GM12878 (cell line): ENCODE measurements at regions of chr9 and their contacts with region 1.

Region 1: GRCh38 chr9:94681508-94681907 is 42.2 kb upstream of the FBP1 start:
- DNase-seq: peak; percentile 17
- ATAC-seq: peak; percentile 99
- H3K4me3 ChIP-seq: no peak overlapping the region
- H3K27ac ChIP-seq: no peak overlapping the region
- H3K4me1 ChIP-seq: no peaks in the 10 kb centered on the region; the same call in 1 of the 2 replicates
- H3K27me3 ChIP-seq: no peaks in the 10 kb centered on the region
- CTCF ChIP-seq: peak; percentile 65 to 82 (median 65); a peak in 5 of 6 replicates
- EP300 ChIP-seq: no peak
- POLR2A ChIP-seq: no peak
- RAD21 ChIP-seq: peak; percentile 79

Region 2: DNA sequence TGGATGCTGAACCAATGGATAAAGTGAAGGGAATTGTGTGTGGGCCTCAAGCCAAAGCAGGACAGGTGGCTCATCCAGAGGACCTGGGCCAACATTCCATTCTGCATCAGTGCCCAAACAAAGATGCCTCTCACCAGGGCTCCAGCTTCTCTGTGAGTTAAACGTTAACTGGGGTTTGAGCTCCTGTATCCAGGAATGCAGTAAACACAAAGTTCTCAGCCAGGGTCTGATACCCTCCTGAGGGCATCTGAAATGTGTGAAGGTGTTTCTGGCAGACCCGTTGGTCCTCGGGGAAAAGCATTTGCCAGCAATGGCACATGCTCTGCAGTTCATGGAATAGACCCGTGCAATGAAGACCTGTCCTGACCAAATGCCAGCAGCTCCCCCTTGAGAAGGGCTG is 11.1 kb after region 1 on chr9:
- CTCF ChIA-PET with region 1: interaction called, 14 read pairs
- POLR2A ChIA-PET with region 1: no interaction called
- RAD21 ChIA-PET with region 1: interaction called, 4 read pairs
- SMC1A ChIA-PET with region 1: interaction called, 4 read pairs
- in situ Hi-C with region 1: no loop called
- intact Hi-C with region 1: no loop called
- DNase-seq: no peak
- ATAC-seq: no peak
- H3K4me3 ChIP-seq: no peak overlapping the region
- H3K27ac ChIP-seq: no peak overlapping the region
- H3K4me1 ChIP-seq: no peaks in the 10 kb centered on the region
- H3K27me3 ChIP-seq: no peaks in the 10 kb centered on the region; a peak in 1 of 4 replicates
- CTCF ChIP-seq: no peak
- EP300 ChIP-seq: no peak
- POLR2A ChIP-seq: no peak
- RAD21 ChIP-seq: no peak

Region 3: DNA sequence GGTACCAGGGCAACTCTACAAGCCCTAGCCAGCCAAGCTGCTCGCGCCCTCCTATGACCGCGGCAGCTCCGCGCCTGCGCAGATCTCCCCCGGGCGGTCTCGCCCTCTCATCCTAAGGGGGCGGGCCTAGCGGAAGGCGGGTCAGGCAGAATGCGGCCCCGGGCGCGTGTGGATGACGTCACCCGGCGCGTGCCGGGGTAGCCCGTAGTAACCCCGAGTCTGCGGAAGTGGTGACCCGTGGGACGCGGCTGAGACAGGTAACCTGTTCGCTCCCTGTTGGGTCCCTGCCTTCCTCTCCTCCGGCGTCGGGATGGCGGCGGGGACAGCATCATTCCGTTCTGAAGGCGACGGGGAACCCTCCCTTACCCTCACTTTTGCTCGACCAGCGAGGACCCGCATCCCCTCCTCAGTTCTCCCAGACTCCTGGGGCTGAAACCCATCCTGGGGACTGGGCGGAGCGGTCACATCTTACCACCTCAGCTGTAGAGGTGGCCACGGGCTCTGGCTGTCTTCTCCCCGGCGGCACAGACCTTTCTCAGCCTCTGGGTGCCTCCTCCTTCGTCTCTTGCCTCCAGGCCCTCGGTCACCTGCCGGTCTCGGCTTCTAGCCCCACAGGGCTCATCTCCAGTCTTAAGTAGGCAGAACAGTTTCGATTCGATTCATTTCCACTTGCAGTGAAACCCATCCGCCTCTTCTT is 45.1 kb after region 1 on chr9 and contains the start of gene AOPEP:
- CTCF ChIA-PET with region 1: interaction called, 5 read pairs
- POLR2A ChIA-PET with region 1: no interaction called
- RAD21 ChIA-PET with region 1: interaction called, 10 read pairs
- SMC1A ChIA-PET with region 1: interaction called, 3 read pairs
- in situ Hi-C with region 1: no loop called
- intact Hi-C with region 1: no loop called
- DNase-seq: peak; percentile 86
- ATAC-seq: peak; percentile 98
- H3K4me3 ChIP-seq: peak within 1 kb of the TSS; percentile 81
- H3K27ac ChIP-seq: peak within 1 kb of the TSS; percentile 86
- H3K4me1 ChIP-seq: peaks cover 3% of the 10 kb centered on the region; the same call in 1 of the 2 replicates
- H3K27me3 ChIP-seq: no peaks in the 10 kb centered on the region
- CTCF ChIP-seq: no peak
- EP300 ChIP-seq: 0 out of 4 replicates have a peak, but pooled peaks of 1 of the 2 experiments have one; percentile 8
- POLR2A ChIP-seq: peak; percentile 94
- RAD21 ChIP-seq: no peak
- polyA plus RNA-seq, gene AOPEP: 2.3 to 5.1 TPM

Region 4: DNA sequence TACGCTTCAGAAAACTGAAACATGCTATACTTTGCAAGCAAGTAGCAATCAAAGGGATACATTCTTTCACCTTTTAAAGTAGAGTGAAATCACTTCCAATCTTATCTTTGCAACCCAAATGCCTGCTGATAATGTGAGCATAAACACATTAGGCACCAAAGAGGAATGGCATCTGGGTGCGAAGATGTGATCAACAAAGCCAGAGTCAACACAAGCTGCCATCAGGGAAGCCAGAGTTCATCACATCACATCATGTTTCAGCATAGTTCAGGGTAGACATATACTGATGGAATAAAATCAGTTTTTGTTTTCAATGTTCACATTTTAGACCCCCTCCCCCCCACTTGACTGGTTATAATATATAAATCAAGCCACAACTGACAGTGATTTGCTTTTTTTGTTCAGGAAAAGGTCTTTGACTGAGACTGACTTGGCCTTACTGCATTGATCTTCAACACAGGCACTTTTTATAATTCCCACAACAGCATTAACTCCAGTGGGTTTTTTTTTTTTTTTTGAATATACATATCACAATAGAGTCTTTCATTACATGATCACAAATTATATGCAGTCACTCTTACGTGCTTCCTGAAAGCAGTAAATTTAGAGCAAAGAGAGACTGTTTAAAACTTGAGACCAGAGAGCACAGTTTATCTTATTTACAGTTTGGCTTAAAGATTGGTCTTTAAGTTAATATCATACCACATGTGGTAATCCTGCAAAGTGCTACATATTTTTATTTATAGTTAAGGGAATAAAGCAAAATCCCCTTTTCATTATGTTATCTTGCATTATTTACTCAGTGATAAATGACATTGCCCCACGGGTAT is 65.2 kb after region 1 on chr9:
- CTCF ChIA-PET with region 1: no interaction called
- POLR2A ChIA-PET with region 1: no interaction called
- RAD21 ChIA-PET with region 1: no interaction called
- SMC1A ChIA-PET with region 1: no interaction called
- in situ Hi-C with region 1: no loop called
- intact Hi-C with region 1: no loop called
- DNase-seq: no peak
- ATAC-seq: no peak
- H3K4me3 ChIP-seq: no peak overlapping the region
- H3K27ac ChIP-seq: no peak overlapping the region
- H3K4me1 ChIP-seq: no peaks in the 10 kb centered on the region
- H3K27me3 ChIP-seq: no peaks in the 10 kb centered on the region
- CTCF ChIP-seq: no peak
- EP300 ChIP-seq: no peak
- POLR2A ChIP-seq: no peak
- RAD21 ChIP-seq: no peak

Region 5: GRCh38 chr9:94920398-94921091 is 239.0 kb after region 1 on chr9:
- CTCF ChIA-PET with region 1: interaction called, 53 read pairs
- POLR2A ChIA-PET with region 1: no interaction called
- RAD21 ChIA-PET with region 1: interaction called, 30 read pairs
- SMC1A ChIA-PET with region 1: interaction called, 41 read pairs
- in situ Hi-C with region 1: loop called (anchors 5 kb)
- intact Hi-C with region 1: loop called (anchors 1 kb)
- DNase-seq: no peak
- ATAC-seq: no peak
- H3K4me3 ChIP-seq: no peak overlapping the region
- H3K27ac ChIP-seq: no peak overlapping the region
- H3K4me1 ChIP-seq: no peaks in the 10 kb centered on the region
- H3K27me3 ChIP-seq: no peaks in the 10 kb centered on the region
- CTCF ChIP-seq: no peak
- EP300 ChIP-seq: no peak
- POLR2A ChIP-seq: no peak
- RAD21 ChIP-seq: no peak

Region 6: GRCh38 chr9:95167998-95168397 is 486.5 kb after region 1 on chr9:
- CTCF ChIA-PET with region 1: interaction called, 52 read pairs
- POLR2A ChIA-PET with region 1: no interaction called
- RAD21 ChIA-PET with region 1: interaction called, 15 read pairs
- SMC1A ChIA-PET with region 1: interaction called, 25 read pairs
- in situ Hi-C with region 1: no loop called
- intact Hi-C with region 1: no loop called
- DNase-seq: no peak
- ATAC-seq: peak; percentile 72
- H3K4me3 ChIP-seq: no peak overlapping the region
- H3K27ac ChIP-seq: no peak overlapping the region
- H3K4me1 ChIP-seq: peaks cover 5% of the 10 kb centered on the region; the same call in 1 of the 2 replicates
- H3K27me3 ChIP-seq: no peaks in the 10 kb centered on the region
- CTCF ChIP-seq: peak; percentile 56 to 87 (median 81)
- EP300 ChIP-seq: no peak
- POLR2A ChIP-seq: no peak
- RAD21 ChIP-seq: peak; percentile 59

Region 7: DNA sequence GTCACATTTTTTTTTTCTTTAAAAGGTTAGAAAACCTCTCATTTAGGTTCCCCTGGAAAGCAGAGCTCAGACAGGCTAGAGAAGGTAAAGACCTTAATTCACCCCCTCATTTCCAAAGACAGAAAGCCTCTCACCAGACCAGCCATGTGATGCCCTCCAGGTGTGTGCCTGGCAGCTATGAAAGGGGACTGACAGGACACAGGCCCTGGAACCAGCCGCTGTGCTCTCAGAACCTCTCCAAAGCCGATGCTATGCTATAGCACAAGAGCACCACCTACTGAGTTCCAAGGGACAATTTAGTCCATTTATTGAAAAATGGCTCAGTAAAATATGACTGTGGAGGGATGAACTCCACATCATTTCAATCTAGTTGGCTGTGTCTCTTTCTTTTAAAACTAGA is 587.2 kb after region 1 on chr9:
- CTCF ChIA-PET with region 1: interaction called, 10 read pairs
- POLR2A ChIA-PET with region 1: no interaction called
- RAD21 ChIA-PET with region 1: interaction called, 5 read pairs
- SMC1A ChIA-PET with region 1: interaction called, 3 read pairs
- in situ Hi-C with region 1: no loop called
- intact Hi-C with region 1: loop called (anchors 10 kb)
- DNase-seq: no peak
- ATAC-seq: peak; percentile 68
- H3K4me3 ChIP-seq: no peak overlapping the region
- H3K27ac ChIP-seq: no peak overlapping the region
- H3K4me1 ChIP-seq: peaks cover 18% of the 10 kb centered on the region
- H3K27me3 ChIP-seq: no peaks in the 10 kb centered on the region
- CTCF ChIP-seq: peak; percentile 31 to 56 (median 36); a peak in 4 of 6 replicates
- EP300 ChIP-seq: no peak
- POLR2A ChIP-seq: no peak
- RAD21 ChIP-seq: peak; percentile 76